ENCODE measurements at regions of chrX and their contacts with region 1.

Region 1: GRCh38 chrX:135477576-135477975 is 42.9 kb upstream of the INTS6L start:
- DNase-seq: peak; percentile 82
- ATAC-seq: peak; percentile 36 to 77

Region 2: DNA sequence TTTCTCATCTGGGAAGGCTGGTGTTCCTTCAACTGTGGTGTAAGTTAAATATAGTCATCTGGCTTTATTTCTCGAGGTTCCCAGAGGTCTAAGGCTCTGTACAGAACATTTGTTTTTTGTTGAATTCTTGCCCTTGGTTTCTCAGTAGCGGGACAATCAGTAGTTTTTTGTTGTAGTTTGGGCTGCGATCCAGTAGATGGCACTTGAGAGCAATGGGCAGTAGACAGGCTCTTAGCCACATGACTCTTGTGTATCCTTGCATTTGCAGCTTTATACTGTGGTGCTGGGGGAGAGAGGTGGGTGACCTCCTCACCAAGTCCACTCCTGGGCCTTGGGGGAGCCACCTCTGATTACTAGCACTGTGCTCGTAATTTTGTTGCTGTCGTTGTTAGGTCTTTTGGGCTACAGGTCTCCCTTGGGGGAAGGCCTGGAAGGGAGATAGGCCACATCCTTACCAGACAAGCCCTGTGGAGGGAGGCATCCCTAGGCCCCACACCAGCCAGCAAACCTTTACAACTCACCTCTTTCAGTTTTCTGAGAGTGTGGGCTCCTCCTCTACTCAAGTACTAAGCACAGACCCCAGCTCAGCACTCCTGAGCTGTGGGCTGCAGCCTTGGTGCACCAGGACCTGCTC is 365.4 kb before region 1 on chrX:
- intact Hi-C with region 1: loop called in 1 of 2 experiments (anchors 10 kb)
- DNase-seq: no peak
- ATAC-seq: no peak

Region 3: DNA sequence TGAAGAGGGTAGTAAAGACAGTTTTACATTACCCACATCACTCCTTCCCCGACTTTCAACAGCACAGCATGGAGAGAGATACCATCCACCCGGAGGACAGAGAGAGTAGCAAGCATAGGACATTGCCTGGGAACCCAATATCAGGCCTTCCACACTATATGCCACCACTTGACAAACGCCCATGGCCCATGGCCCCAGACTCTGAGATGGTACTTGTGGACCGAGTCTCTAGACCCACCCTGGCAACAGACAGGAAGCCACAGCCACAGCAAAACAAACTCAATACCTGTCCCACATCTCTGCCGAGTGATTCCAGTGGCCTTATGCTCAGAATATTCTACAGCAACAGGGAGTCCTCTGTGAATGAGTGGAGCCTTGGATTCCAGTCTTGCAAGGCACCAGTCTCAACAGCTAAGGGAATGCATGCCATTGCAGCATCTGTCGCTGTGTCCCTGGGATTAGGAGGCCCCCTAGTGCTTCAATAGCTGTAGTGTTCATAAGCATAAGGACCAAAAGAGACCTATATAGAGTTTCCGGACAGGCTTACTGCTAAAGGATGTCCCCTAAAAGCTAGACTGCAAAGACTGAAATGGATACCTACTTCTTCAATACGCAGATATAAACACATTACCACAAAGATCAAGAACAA is 291.7 kb before region 1 on chrX:
- intact Hi-C with region 1: loop called in 1 of 2 experiments (anchors 2 kb)
- DNase-seq: no peak
- ATAC-seq: peak in 1 of 2 donors; percentile 69